Activated CD8-positive, alpha-beta T cell treated with anti-CD3 and anti-CD28 coated beads, Interleukin-2, amount 10 ng/mL, durations not matched to agents 7 days and 5 days (primary cell): ENCODE measurements at regions of chr6 and their contacts with region 1.

Region 1: DNA sequence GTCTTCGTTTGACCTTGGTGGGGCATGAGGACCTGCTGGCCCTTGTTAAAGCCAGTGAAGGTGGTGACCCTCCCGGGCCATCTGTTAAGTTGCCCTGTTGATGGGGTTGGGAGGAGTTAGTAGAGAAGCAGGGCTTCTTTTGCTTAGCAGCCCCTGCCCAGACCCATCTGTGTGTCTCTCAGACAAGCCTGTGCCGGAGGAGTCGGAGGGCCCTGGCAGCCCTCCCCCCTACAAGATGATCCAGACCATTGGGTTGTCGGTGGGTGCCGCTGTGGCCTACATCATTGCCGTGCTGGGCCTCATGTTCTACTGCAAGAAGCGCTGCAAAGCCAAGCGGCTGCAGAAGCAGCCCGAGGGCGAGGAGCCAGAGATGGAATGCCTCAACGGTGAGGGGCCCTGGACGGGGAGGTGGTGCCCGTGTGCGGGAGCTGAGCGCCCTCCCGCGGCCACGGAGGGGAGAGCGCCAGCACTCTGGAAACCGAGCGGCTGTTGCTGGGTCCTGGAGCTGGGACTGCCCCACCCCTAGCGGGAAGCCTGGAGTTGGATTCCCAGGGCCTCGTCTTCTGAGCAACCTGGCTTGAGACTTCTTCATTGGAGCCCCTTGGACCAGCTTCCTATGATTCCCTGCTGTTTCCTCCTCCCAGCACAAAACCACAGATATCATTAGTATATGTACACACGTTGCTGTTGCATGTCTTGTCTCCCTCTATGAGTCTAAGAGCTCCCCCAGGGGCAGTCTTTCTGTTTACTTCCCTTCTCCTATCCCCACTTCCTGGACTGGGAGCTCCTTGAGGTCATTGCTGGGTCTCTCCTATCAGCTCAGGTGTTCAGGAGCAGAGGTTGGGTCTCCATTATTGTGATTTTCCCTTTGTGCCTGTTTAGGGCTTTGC is 27.6 kb upstream of the SRF start:
- DNase-seq: peak; percentile 85
- ATAC-seq: peak; percentile 95
- H3K4me3 Mint-ChIP-seq: peak overlapping the region; percentile 42
- H3K27ac Mint-ChIP-seq: peak overlapping the region; percentile 87
- H3K4me1 Mint-ChIP-seq: peaks cover 31% of the 10 kb centered on the region
- H3K27me3 Mint-ChIP-seq: no peaks in the 10 kb centered on the region

Region 2: DNA sequence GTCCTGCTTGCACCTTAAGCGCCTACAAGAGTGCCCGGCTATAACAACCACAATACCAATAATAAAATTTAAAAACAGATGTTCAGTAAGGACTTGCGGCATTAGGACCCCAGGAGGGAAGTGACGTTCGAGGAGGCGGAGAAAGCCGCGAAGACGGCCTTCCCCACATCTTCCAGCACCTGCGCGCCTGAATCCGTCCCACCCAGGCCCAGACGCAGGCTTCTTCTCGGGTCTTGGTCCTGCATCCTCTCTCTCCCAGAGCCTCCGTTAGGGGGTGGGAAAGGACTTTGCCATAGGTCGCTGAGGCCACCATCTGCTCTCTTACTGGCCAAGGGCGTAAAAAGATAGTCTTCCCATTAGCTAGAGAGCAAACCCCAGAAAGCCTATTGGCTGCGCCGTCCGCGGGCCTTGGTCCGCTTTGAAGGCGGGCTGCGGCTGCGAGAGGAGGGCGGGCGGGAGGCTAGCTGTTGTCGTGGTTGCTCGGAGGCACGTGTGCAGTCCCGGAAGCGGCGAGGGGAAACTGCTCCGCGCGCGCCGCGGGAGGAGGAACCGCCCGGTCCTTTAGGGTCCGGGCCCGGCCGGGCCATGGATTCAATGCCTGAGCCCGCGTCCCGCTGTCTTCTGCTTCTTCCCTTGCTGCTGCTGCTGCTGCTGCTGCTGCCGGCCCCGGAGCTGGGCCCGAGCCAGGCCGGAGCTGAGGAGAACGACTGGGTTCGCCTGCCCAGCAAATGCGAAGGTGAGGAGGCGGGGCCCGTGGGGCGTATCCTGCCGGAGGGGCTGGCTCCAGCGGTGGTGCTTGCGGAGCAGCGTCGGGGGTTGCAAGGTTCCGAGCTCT is 214.3 kb before region 1 on chr6 and contains the start of gene CNPY3:
- CTCF ChIA-PET with region 1: interaction called, 25 read pairs
- POLR2A ChIA-PET with region 1: interaction called, 8 read pairs
- DNase-seq: peak; percentile 98
- ATAC-seq: peak; percentile 87
- H3K4me3 Mint-ChIP-seq: peak within 1 kb of the TSS; percentile 90
- H3K27ac Mint-ChIP-seq: peak within 1 kb of the TSS; percentile 94
- H3K4me1 Mint-ChIP-seq: peaks cover 41% of the 10 kb centered on the region
- H3K27me3 Mint-ChIP-seq: no peaks in the 10 kb centered on the region
- total RNA-seq, gene CNPY3: 86.0 to 87.6 TPM

Region 3: DNA sequence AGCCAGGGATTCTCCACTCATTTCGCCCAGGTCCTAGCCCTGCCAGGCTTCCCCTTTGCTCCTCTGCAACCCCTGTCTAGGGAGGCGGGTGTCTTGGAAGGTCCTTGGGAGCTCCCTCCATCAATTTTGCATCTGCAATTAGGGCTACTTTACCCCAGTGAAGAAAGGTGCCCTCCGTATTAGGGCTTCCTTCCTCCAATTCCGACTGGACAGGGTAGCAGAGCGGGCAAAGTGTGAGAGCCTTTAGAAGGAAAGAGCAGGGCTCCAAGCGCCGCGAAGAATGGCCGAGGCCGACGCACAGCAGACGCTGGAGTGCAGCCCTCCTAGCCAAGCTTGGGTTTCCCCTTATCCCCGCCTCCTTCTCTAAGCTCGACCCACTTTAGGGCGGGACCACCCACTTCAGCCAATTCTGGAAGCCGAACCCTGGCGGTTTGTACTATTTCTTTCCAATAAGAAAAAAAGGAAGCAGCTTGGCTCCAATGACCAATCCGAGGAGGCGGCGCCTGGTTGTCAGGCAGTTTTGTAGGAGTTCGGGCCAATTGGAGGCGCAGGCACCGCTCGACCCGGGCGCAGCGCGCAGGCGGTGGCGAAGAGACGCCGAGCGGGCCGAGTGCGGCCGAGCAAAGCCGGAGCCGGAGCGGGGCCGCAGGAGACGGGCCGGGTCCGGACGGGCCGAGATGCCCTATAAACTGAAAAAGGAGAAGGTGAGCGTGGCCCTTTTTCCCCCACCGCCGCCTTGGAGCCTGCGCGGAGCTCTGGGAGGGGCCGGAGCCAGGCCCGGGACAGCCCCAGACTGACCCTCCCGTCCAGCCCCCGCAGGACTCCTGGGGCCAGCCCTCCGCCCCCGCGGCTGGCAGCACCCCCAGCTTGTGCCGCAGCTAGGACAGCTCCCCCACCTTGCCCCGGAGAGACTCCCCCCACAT is 159.2 kb before region 1 on chr6 and contains the start of gene PPP2R5D:
- CTCF ChIA-PET with region 1: interaction called, 16 read pairs
- POLR2A ChIA-PET with region 1: interaction called, 7 read pairs
- DNase-seq: peak; percentile 99
- ATAC-seq: peak; percentile 96
- H3K4me3 Mint-ChIP-seq: peak within 1 kb of the TSS; percentile 88
- H3K27ac Mint-ChIP-seq: peak within 1 kb of the TSS; percentile 90
- H3K4me1 Mint-ChIP-seq: peaks cover 51% of the 10 kb centered on the region
- H3K27me3 Mint-ChIP-seq: no peaks in the 10 kb centered on the region
- total RNA-seq, gene PPP2R5D: 63.1 to 66.5 TPM

Region 4: GRCh38 chr6:43021270-43022047 is 122.0 kb before region 1 on chr6 and contains the start of gene RRP36:
- CTCF ChIA-PET with region 1: interaction called, 16 read pairs
- POLR2A ChIA-PET with region 1: interaction called, 6 read pairs
- DNase-seq: peak; percentile 65
- ATAC-seq: peak; percentile 79
- H3K4me3 Mint-ChIP-seq: peak within 1 kb of the TSS; percentile 90
- H3K27ac Mint-ChIP-seq: peak within 1 kb of the TSS; percentile 92
- H3K4me1 Mint-ChIP-seq: peaks cover 31% of the 10 kb centered on the region
- H3K27me3 Mint-ChIP-seq: no peaks in the 10 kb centered on the region
- total RNA-seq, gene RRP36: 84.3 to 92.8 TPM

Region 5: GRCh38 chr6:43070028-43070632 is 73.3 kb before region 1 on chr6:
- CTCF ChIA-PET with region 1: interaction called, 25 read pairs
- POLR2A ChIA-PET with region 1: no interaction called
- DNase-seq: peak; percentile 43
- ATAC-seq: peak; percentile 78
- H3K4me3 Mint-ChIP-seq: no peak overlapping the region
- H3K27ac Mint-ChIP-seq: no peak overlapping the region
- H3K4me1 Mint-ChIP-seq: peaks cover 3% of the 10 kb centered on the region
- H3K27me3 Mint-ChIP-seq: peaks cover 3% of the 10 kb centered on the region

Region 6: DNA sequence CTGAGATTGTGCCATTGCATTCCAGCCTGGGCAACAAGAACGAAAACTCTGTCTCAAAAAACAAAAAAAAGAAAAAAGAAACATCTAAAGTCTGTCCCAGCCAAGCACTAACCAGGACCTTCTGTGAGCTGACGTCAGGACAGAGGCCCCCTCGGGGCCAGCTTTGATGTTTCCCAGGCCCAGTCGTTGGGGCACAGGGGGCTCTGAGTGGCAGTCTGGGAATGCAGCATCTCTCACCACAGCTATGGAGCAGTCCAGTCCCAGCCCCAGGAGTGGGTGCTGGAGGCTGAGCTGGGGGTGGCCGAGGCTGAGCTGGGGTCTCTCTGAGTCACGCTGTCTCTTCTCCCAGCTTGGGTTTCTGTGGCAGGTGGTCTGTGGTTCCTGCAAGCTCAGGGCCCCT is 18.4 kb before region 1 on chr6:
- CTCF ChIA-PET with region 1: interaction called, 17 read pairs
- POLR2A ChIA-PET with region 1: no interaction called
- DNase-seq: no peak
- ATAC-seq: no peak
- H3K4me3 Mint-ChIP-seq: no peak overlapping the region
- H3K27ac Mint-ChIP-seq: no peak overlapping the region
- H3K4me1 Mint-ChIP-seq: no peaks in the 10 kb centered on the region
- H3K27me3 Mint-ChIP-seq: peaks cover 3% of the 10 kb centered on the region

Region 7: DNA sequence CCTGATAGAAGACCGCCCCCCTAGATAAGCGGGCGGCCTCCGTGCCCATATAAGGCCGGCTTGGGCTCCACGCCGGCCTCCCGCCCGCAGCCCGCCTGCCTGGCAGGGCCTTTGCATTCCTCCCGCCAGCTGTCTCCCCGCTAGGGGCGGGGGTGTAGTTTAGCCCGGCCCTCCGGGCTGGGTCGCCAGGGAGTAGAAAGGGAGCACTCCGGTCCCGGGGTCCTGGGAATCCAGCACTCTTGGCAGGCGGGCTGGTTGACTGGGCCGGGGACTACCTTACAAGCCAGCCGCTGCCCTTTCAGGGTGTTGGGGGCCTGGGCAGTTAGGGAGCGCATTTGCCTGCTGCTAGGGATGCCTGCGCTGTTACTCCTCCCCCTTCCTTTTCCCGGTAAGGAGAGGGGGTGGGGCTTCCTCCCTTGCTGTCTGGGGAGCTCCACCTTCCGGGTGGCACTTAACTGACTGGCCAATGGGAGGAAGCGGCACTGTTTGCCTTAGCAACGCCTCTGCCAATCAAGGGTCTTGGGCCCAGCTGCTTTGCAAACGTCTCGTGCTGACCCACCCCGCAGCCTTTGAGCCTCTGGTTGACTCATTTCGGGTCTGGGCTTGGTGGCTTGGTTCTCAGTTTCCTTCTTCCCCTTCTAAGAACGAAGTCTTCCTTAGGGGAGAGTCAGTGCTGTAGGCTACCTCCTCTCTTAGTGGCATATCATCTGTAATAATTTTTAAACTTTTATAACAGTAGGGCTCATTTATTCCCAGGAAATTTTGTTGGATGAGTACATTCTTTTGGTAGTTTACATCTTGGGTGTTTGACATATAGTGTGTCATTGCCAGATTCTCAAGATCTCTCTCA is 31.0 kb after region 1 on chr6:
- CTCF ChIA-PET with region 1: interaction called, 12 read pairs
- POLR2A ChIA-PET with region 1: interaction called, 4 read pairs
- DNase-seq: peak; percentile 98
- ATAC-seq: peak; percentile 73
- H3K4me3 Mint-ChIP-seq: peak overlapping the region; percentile 96
- H3K27ac Mint-ChIP-seq: peak overlapping the region; percentile 86
- H3K4me1 Mint-ChIP-seq: peaks cover 53% of the 10 kb centered on the region
- H3K27me3 Mint-ChIP-seq: no peaks in the 10 kb centered on the region